Mammary epithelial cell (primary cell): ENCODE measurements at regions of chr9 and their contacts with region 1.

Region 1: GRCh38 chr9:134089972-134090371 is 22.1 kb upstream of the BRD3 start:
- DNase-seq: no peak
- H3K4me3 ChIP-seq: no peak overlapping the region
- H3K27ac ChIP-seq: no peak overlapping the region
- H3K4me1 ChIP-seq: no peaks in the 10 kb centered on the region
- H3K27me3 ChIP-seq: no peaks in the 10 kb centered on the region
- CTCF ChIP-seq: no peak

Region 2: DNA sequence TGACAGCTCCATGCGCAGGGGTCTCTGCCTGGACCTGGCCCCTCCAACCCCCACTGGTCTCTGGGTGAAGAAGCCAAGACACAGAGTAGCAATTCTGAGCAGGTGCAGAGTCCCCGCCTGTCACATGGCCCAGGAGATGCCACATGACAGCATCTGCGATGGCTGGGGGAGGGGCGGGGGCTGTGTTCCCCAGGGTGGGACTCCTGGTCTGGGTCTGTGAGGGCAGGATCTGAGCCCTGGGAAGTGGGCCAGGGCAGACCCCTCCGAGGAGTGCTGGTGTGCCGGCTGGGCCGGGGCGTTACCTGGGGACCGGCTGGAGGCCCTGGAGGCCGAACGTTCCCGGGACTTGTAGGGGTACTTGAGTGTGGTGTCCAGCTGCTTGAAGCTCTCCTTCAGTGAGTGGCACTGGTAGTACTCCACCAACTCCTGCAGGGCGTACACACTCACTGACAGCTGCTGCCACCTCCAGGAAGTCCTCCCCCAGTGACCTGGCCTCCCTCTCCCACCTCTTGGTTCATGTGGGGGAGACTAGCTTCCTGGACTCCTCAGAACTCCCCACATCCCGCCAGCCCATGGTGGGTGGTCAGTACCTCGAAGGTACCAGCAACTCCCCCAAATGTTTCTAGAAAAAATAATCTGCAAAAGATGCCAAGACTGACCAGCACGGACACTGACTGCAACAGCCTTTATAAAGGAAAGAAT is 319.7 kb before region 1 on chr9:
- CTCF ChIA-PET with region 1: no interaction called
- dilution Hi-C with region 1: loop called (anchors 5 kb)
- in situ Hi-C with region 1: no loop called
- intact Hi-C with region 1: no loop called
- DNase-seq: no peak
- H3K4me3 ChIP-seq: no peak overlapping the region
- H3K27ac ChIP-seq: no peak overlapping the region
- H3K4me1 ChIP-seq: no peaks in the 10 kb centered on the region
- H3K27me3 ChIP-seq: no peaks in the 10 kb centered on the region
- CTCF ChIP-seq: no peak

Region 3: GRCh38 chr9:134035041-134036039 is 54.6 kb before region 1 on chr9:
- CTCF ChIA-PET with region 1: no interaction called
- dilution Hi-C with region 1: loop called (anchors 5 kb)
- in situ Hi-C with region 1: no loop called
- intact Hi-C with region 1: no loop called
- DNase-seq: no peak
- H3K4me3 ChIP-seq: no peak overlapping the region
- H3K27ac ChIP-seq: no peak overlapping the region
- H3K4me1 ChIP-seq: no peaks in the 10 kb centered on the region
- H3K27me3 ChIP-seq: no peaks in the 10 kb centered on the region
- CTCF ChIP-seq: no peak